Activated naive CD4-positive, alpha-beta T cell treated with anti-CD3 and anti-CD28 coated beads for 36 hours (primary cell): ENCODE measurements at regions of chr2 and their contacts with region 1.

Region 1: DNA sequence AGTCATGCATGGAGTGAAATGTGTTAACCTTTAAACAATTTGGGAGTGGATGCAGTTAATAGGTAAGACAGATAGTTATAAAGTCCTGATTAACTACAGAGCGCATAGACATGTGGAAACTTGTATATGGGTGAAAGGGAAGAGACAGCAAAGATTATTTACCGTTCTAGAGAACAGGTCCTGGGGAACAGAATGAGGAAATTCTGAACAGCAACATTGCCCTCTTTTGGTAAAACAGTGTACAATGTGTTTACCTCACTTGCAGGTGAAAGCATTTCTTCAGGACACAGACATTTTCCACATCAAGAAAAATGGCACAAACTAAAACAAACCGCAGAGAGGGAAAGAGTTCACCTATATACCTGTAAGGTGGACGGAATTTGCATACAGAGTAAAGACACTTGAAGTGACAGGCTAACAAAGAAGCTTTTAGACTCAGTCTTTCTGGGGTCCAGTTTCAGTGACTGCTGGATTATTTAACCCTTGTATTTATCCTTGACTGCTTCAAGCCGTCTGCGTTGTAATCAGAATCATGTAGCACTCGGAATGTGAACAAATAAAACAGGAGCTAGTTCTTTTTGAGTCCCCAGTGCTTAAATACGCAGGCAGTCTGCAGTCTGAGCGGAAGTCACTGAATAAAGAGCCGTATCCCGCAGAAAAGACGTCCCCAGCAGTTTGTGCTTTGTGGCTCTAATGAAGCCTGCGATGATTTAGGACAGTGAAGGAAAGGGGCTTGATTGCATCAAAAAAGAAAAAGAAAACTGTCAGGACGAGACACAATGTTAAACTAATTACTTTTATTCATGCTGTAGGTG is 364.8 kb upstream of the GALNT5 start:
- DNase-seq: no peak
- H3K4me3 Mint-ChIP-seq: no peak overlapping the region
- H3K27ac Mint-ChIP-seq: no peak overlapping the region
- H3K4me1 Mint-ChIP-seq: peaks cover 5% of the 10 kb centered on the region
- H3K27me3 Mint-ChIP-seq: peaks cover 15% of the 10 kb centered on the region

Region 2: DNA sequence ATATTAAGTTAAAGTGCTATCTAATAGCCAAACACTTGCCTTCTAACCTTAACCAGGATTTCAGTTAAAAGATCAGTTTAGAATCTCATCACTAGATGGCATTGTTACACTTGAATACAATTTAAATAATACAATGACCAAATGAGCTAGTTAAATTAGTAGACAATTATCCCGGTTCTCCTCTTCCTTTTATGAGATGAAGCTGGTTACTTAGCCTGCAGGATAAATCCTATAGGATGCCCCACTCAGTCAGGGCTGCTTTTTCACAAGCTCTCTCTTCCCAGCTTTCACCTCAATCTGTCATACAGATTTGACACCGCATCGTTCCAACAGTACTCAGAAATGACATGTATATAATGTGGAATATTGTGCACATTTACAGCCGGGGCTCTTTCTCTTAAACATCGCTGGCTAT is 1515.4 kb before region 1 on chr2:
- CTCF ChIA-PET with region 1: no interaction called
- intact Hi-C with region 1: loop called (anchors 1 kb)
- DNase-seq: no peak
- H3K4me3 Mint-ChIP-seq: no peak overlapping the region
- H3K27ac Mint-ChIP-seq: no peak overlapping the region
- H3K4me1 Mint-ChIP-seq: peaks cover 2% of the 10 kb centered on the region
- H3K27me3 Mint-ChIP-seq: peaks cover 2% of the 10 kb centered on the region

Region 3: DNA sequence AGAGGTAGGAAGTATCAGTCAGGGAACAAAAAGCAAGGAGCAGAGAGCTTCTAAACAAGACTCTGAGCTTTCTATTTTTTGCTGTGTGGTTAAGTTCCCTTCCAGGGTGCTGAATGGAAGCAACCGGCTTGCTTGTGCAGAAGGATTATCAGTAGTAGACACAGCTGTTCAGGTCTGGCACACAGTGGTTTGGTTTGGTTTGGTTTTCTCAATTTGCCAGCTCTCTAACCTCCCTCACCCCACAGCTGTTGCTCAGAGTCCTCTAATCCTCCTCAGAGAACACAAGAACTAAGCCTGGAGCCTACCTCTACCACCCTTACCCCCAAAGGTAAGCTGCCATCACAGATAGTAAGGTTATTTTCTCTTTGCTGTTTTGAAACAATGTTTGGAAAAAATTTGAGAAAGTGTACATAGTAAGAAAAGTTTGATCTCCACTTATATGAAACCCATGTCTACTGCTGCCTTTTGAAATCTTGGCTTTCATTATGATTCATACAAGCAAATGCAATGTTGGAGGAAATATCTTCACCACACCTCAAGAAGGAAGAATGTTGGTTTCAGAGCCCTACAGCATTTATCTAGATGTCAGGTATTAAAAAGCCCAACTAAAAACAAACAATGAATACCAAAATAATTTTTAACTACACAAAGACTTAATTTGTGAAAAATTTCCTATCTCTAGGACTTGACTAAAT is 815.5 kb before region 1 on chr2:
- CTCF ChIA-PET with region 1: no interaction called
- intact Hi-C with region 1: loop called (anchors 10 kb)
- DNase-seq: no peak
- H3K4me3 Mint-ChIP-seq: no peak overlapping the region
- H3K27ac Mint-ChIP-seq: no peak overlapping the region
- H3K4me1 Mint-ChIP-seq: no peaks in the 10 kb centered on the region
- H3K27me3 Mint-ChIP-seq: no peaks in the 10 kb centered on the region

Region 4: GRCh38 chr2:156192468-156192867 is 700.2 kb before region 1 on chr2:
- CTCF ChIA-PET with region 1: no interaction called
- intact Hi-C with region 1: loop called (anchors 2 kb)
- DNase-seq: peak; percentile 6
- H3K4me3 Mint-ChIP-seq: no peak overlapping the region
- H3K27ac Mint-ChIP-seq: no peak overlapping the region
- H3K4me1 Mint-ChIP-seq: no peaks in the 10 kb centered on the region
- H3K27me3 Mint-ChIP-seq: no peaks in the 10 kb centered on the region

Region 5: DNA sequence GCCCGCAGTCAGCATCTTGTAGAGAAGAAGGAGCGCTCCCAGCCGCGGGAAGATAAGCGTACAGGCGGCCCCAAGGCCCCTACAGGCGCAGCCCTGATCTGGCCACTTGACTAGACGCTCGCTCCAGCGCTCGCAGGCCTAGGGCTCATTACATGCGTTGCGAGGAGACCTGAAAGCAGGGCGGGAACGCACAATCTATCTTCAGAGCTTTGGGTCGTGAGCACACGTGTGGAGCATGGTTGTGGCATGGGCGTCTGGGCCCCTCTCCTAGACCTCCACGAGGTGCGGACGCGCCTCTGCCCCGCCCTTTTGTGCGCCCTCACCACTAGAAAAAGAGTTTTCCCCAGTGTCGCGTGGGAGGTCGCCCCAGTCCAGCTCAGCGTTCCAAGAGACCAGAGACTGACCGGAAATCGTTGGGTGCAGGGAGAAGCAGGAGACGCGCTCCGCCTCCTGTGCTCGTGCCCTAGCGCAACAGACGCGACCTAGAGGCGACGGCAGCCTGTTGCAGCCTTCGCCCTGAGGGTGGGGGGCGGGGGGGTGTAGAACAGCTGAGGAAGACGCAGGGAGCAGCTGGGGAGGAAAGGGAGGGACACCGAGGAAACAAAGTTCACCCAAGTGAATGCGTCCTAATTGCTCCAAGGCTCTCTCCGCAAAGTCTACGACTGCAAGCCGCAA is 572.7 kb before region 1 on chr2:
- CTCF ChIA-PET with region 1: no interaction called
- intact Hi-C with region 1: loop called (anchors 5 kb)
- DNase-seq: no peak
- H3K4me3 Mint-ChIP-seq: peak overlapping the region; percentile 49
- H3K27ac Mint-ChIP-seq: no peak overlapping the region
- H3K4me1 Mint-ChIP-seq: peaks cover 36% of the 10 kb centered on the region
- H3K27me3 Mint-ChIP-seq: peaks cover 70% of the 10 kb centered on the region

Region 6: DNA sequence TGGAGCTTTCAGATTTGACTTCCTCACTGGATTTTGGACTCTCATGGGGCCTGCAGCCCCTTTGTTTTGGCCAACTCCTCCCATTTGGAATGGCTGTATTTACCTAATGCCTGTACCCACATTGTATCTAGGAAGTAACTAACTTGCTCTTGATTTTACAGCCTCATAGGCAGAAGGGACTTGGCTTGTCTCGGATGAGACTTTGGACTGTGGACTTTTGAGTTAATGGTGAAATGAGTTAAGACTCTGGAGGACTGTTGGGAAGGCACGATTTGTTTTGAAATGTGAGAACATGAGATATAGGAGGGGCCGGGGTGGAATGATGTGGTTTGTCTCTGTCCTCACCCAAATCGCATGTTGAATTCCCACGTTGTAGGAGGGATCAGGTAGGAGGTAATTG is 131.5 kb after region 1 on chr2:
- CTCF ChIA-PET with region 1: no interaction called
- intact Hi-C with region 1: no loop called
- DNase-seq: no peak
- H3K4me3 Mint-ChIP-seq: no peak overlapping the region
- H3K27ac Mint-ChIP-seq: no peak overlapping the region
- H3K4me1 Mint-ChIP-seq: no peaks in the 10 kb centered on the region
- H3K27me3 Mint-ChIP-seq: peaks cover 5% of the 10 kb centered on the region